Testis (tissue), 5 donors: ENCODE measurements at regions of chr17 and their contacts with region 1.

Region 1: DNA sequence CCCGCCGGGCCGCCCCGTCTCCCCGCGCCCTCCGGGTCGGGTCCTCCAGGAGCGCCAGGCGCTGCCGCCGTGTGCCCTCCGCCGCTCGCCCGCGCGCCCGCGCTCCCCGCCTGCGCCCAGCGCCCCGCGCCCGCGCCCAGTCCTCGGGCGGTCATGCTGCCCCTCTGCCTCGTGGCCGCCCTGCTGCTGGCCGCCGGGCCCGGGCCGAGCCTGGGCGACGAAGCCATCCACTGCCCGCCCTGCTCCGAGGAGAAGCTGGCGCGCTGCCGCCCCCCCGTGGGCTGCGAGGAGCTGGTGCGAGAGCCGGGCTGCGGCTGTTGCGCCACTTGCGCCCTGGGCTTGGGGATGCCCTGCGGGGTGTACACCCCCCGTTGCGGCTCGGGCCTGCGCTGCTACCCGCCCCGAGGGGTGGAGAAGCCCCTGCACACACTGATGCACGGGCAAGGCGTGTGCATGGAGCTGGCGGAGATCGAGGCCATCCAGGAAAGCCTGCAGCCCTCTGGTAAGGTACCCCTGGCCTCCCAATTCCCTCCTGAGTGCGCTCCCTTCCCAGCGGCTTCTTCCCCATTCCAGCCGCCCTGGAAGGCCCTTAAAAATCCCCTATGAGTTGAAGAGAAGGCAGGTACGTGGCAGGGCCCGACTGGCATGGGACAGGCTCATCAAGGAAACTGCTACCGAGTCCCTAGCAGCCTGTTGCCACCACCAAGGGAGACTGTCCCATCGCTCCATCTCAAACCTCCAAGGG is 505 bp downstream of the IGFBP4 start:
- DNase-seq: peak; percentile 78
- H3K4me3 ChIP-seq: peak overlapping the region; percentile 69 to 76
- H3K27ac ChIP-seq: peak overlapping the region; percentile 76 to 97
- H3K4me1 ChIP-seq: peaks cover 54% of the 10 kb centered on the region
- H3K27me3 ChIP-seq: no peaks in the 10 kb centered on the region
- CTCF ChIP-seq: peak in 2 of 3 experiments; percentile 11 to 25
- POLR2A ChIP-seq: no peak

Region 2: GRCh38 chr17:40331743-40332641 is 111.8 kb before region 1 on chr17:
- intact Hi-C with region 1: no loop called
- DNase-seq: peak; percentile 92
- H3K4me3 ChIP-seq: no peak overlapping the region
- H3K27ac ChIP-seq: peak overlapping the region; percentile 5 to 71
- H3K4me1 ChIP-seq: peaks cover 97% of the 10 kb centered on the region
- H3K27me3 ChIP-seq: no peaks in the 10 kb centered on the region
- CTCF ChIP-seq: no peak
- POLR2A ChIP-seq: no peak

Region 3: GRCh38 chr17:40355123-40355803 is 88.5 kb before region 1 on chr17:
- intact Hi-C with region 1: no loop called
- DNase-seq: peak; percentile 84
- H3K4me3 ChIP-seq: no peak overlapping the region
- H3K27ac ChIP-seq: peak overlapping the region; percentile 74 to 83
- H3K4me1 ChIP-seq: peaks cover 50% of the 10 kb centered on the region
- H3K27me3 ChIP-seq: no peaks in the 10 kb centered on the region
- CTCF ChIP-seq: peak; percentile 95 to 98 (median 96)
- POLR2A ChIP-seq: no peak

Region 4: DNA sequence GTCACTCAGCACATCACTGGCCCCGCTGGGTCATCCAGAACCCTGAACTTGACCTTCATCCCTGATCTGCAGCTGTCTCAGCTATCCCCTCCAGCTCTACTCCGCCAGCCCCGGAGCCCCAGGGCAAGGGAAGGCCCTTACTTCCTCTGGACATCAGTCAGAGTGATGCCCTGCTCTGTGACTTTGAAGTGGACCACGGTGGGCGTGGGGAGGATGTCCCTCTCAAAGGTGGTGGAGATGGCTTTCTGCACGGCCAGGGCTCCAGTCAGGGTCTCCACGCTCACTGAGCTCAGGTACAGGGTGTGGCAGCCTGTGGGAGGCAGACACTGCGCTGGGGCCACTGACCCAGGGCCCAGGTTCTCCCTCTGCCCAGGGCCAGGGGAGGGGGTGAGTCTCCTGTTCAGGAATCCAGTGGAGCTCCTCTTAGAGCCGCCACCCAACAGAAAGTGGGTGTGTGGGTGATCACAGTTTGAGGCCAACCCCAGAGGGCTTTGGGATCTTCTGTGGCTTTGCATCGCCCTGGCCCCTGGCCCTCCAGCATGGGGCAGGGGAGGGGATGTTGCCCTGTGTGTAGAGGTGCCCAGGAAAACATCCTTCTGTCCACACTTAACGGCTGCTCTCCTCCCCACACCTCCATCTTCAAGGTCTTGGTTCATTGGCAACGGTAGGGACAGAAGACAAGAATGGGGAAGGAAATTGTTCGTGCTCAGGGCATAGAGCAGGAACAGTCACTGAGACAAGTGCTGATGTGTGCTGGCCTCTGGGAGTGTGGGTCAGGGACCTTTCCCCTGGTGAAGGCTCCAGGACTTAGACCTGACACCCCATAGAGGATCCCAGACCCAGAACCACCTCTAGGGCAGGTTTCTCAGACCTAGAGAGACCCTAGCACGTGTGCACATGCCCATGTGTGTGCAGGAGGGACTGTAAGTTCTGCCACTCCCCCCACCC is 36.1 kb after region 1 on chr17:
- intact Hi-C with region 1: loop called (anchors 5 kb)
- DNase-seq: no peak
- H3K4me3 ChIP-seq: no peak overlapping the region
- H3K27ac ChIP-seq: no peak overlapping the region
- H3K4me1 ChIP-seq: peaks cover 21% of the 10 kb centered on the region
- H3K27me3 ChIP-seq: no peaks in the 10 kb centered on the region
- CTCF ChIP-seq: no peak
- POLR2A ChIP-seq: no peak

Region 5: GRCh38 chr17:40559954-40560591 is 116.3 kb after region 1 on chr17:
- intact Hi-C with region 1: loop called (anchors 5 kb)
- DNase-seq: peak; percentile 95
- H3K4me3 ChIP-seq: peak overlapping the region; percentile 22 to 30
- H3K27ac ChIP-seq: peak overlapping the region; percentile 65 to 70
- H3K4me1 ChIP-seq: peaks cover 40% of the 10 kb centered on the region
- H3K27me3 ChIP-seq: no peaks in the 10 kb centered on the region
- CTCF ChIP-seq: peak; percentile 94 to 97 (median 94)
- POLR2A ChIP-seq: no peak